ENCODE measurements at regions of chr6 and their contacts with region 1.

Region 1: GRCh38 chr6:139375232-139376016 is 976 bp upstream of the CITED2 start:
- DNase-seq: peak; percentile 98
- H3K4me3 Mint-ChIP-seq: peak overlapping the region; percentile 97
- H3K27ac Mint-ChIP-seq: peak overlapping the region; percentile 97
- H3K4me1 Mint-ChIP-seq: peaks cover 33% of the 10 kb centered on the region
- H3K27me3 Mint-ChIP-seq: no peaks in the 10 kb centered on the region
- CTCF ChIP-seq: no peak

Region 2: DNA sequence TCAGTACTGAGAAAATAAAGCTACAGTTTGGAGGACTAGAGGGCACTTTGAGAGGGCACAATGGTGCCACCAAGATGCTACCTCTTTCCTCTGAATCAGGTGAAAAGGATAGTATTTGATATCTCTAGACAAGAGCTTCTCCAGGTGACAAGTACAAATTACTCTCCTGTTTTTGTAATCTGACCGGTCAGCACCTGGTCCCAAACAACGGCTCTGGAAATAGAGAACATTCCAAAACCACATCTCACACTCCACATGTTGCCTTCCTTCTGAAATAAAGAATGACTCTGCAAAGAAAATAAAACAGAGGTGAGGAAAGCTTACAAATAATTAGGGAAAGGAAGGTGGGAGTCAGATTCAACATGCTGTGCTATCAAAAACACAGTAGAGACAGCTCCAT is 50.4 kb after region 1 on chr6:
- CTCF ChIA-PET with region 1: no interaction called
- POLR2A ChIA-PET with region 1: interaction called, 10 read pairs
- intact Hi-C with region 1: no loop called
- DNase-seq: no peak
- H3K4me3 Mint-ChIP-seq: no peak overlapping the region
- H3K27ac Mint-ChIP-seq: peak overlapping the region; percentile 33
- H3K4me1 Mint-ChIP-seq: peaks cover 15% of the 10 kb centered on the region
- H3K27me3 Mint-ChIP-seq: no peaks in the 10 kb centered on the region
- CTCF ChIP-seq: no peak

Region 3: DNA sequence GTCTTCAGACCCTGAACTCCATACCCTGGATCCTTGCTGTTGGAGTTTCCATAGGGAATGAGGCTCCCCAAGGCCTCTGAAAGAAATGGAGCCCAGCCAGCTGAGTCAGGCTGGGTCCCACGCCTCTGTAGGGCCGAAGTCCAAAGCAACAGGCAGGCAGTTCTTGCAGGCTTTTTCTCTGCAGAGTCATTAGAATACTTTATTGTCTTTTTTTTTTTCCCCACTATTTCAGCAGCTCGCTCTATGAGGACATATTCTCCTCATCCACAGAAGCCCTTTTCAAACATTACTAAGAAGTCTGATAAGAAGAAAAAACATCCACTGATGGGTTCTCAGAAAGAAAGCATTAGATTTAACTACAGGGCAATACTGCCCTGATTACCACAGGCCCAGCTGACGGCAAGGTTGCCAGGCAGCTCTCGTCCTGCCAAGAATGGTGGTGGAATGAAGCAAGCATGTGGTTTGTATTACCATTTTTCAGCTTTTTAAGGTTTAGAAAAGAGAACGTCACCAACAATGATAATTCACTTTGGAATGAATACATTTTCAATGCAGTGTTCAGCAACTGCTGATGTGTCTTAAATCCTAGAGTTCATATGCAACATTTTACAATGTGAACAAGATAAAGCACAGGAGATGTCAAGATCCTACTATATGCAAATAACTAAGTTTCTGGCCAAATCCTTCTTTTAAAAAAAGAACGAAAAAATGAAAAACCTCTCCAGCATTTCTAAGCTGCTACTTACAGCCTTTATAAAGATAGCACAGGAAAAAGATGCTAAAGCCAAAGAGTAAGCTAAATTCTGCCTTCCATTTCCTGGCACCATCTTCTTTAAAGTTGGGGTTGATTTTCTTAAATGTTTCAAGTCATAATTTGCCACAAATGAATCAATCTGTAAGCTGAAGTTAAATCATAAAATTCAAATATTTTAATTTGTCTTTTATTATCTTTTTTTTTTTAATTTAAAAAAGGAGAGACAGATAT is 222.6 kb after region 1 on chr6:
- CTCF ChIA-PET with region 1: interaction called, 3 read pairs
- POLR2A ChIA-PET with region 1: interaction called, 42 read pairs
- intact Hi-C with region 1: loop called (anchors 1 kb)
- DNase-seq: peak; percentile 82
- H3K4me3 Mint-ChIP-seq: peak overlapping the region; percentile 37
- H3K27ac Mint-ChIP-seq: peak overlapping the region; percentile 92
- H3K4me1 Mint-ChIP-seq: peaks cover 16% of the 10 kb centered on the region
- H3K27me3 Mint-ChIP-seq: no peaks in the 10 kb centered on the region
- CTCF ChIP-seq: no peak

Region 4: GRCh38 chr6:139764498-139764986 is 389.1 kb after region 1 on chr6:
- CTCF ChIA-PET with region 1: interaction called, 9 read pairs
- POLR2A ChIA-PET with region 1: interaction called, 72 read pairs
- intact Hi-C with region 1: loop called (anchors 2 kb)
- DNase-seq: peak; percentile 86
- H3K4me3 Mint-ChIP-seq: peak overlapping the region; percentile 14
- H3K27ac Mint-ChIP-seq: peak overlapping the region; percentile 88
- H3K4me1 Mint-ChIP-seq: peaks cover 37% of the 10 kb centered on the region
- H3K27me3 Mint-ChIP-seq: no peaks in the 10 kb centered on the region
- CTCF ChIP-seq: no peak

Region 5: GRCh38 chr6:140043336-140043735 is 667.9 kb after region 1 on chr6:
- CTCF ChIA-PET with region 1: interaction called, 7 read pairs
- POLR2A ChIA-PET with region 1: interaction called, 43 read pairs
- intact Hi-C with region 1: loop called (anchors 2 kb)
- DNase-seq: peak; percentile 90
- H3K4me3 Mint-ChIP-seq: no peak overlapping the region
- H3K27ac Mint-ChIP-seq: peak overlapping the region; percentile 21
- H3K4me1 Mint-ChIP-seq: peaks cover 43% of the 10 kb centered on the region
- H3K27me3 Mint-ChIP-seq: no peaks in the 10 kb centered on the region
- CTCF ChIP-seq: no peak

Region 6: GRCh38 chr6:140095532-140095931 is 720.1 kb after region 1 on chr6:
- CTCF ChIA-PET with region 1: no interaction called
- POLR2A ChIA-PET with region 1: no interaction called
- intact Hi-C with region 1: no loop called
- DNase-seq: no peak
- H3K4me3 Mint-ChIP-seq: no peak overlapping the region
- H3K27ac Mint-ChIP-seq: no peak overlapping the region
- H3K4me1 Mint-ChIP-seq: no peaks in the 10 kb centered on the region
- H3K27me3 Mint-ChIP-seq: no peaks in the 10 kb centered on the region
- CTCF ChIP-seq: no peak

Region 7: DNA sequence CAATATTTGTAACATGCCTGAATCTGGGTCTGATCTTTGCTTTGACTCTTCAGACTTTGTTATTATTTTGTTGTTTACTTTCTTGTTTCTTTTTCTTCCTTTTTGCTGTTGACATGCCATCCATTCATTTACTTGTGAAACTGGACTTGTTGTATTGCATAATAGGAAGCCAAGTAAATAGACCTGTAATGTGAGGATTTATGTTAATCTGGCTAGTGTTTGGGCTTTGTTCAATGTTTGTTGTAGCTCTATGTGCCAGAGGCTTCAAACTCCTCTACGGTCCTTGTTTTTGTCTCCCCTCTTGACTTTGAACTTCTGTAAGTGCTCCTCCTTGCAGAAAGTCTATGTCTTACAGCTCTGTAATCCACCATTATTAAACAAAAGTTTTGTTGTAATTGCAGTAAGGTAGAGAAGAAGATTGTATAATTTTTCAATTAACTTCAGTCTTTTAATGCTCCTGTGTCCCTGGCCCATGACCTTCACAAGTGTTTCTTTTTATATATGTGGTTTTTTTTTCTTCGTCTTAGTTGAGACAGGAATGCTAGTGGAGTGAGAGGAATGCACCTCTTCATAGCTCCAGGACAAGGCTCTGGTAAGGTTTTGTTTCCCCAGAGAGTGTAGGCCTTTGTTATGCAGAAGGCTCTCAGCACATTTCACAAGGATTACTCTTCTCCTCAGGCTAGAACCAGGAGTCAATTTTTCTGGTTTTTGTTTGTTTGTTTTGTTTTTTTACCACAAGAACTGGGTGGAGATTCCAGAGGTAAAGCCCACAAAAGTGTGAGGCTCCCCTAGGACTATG is 1060.8 kb after region 1 on chr6:
- CTCF ChIA-PET with region 1: interaction called, 6 read pairs
- POLR2A ChIA-PET with region 1: interaction called, 23 read pairs
- intact Hi-C with region 1: loop called (anchors 1 kb)
- DNase-seq: no peak
- H3K4me3 Mint-ChIP-seq: no peak overlapping the region
- H3K27ac Mint-ChIP-seq: peak overlapping the region; percentile 21
- H3K4me1 Mint-ChIP-seq: peaks cover 25% of the 10 kb centered on the region
- H3K27me3 Mint-ChIP-seq: no peaks in the 10 kb centered on the region
- CTCF ChIP-seq: no peak

Region 8: GRCh38 chr6:140857739-140858380 is 1482.4 kb after region 1 on chr6:
- CTCF ChIA-PET with region 1: interaction called, 3 read pairs
- POLR2A ChIA-PET with region 1: interaction called, 25 read pairs
- intact Hi-C with region 1: no loop called
- DNase-seq: peak; percentile 87
- H3K4me3 Mint-ChIP-seq: peak overlapping the region; percentile 70
- H3K27ac Mint-ChIP-seq: peak overlapping the region; percentile 72
- H3K4me1 Mint-ChIP-seq: peaks cover 38% of the 10 kb centered on the region
- H3K27me3 Mint-ChIP-seq: no peaks in the 10 kb centered on the region
- CTCF ChIP-seq: no peak

Measured in MCF 10A (cell line).